Caco-2 (cell line): ENCODE measurements at regions of chr12 and their contacts with region 1.

Region 1: GRCh38 chr12:6323340-6323994 is 13.0 kb downstream of the PLEKHG6 start:
- DNase-seq: peak; percentile 70 to 80
- H3K4me3 ChIP-seq: no peak overlapping the region
- H3K4me3 Mint-ChIP-seq: no peak overlapping the region
- H3K27ac Mint-ChIP-seq: peak overlapping the region; percentile 88
- H3K4me1 ChIP-seq: peaks cover 20% of the 10 kb centered on the region
- H3K4me1 Mint-ChIP-seq: peaks cover 19% of the 10 kb centered on the region
- H3K27me3 ChIP-seq: no peaks in the 10 kb centered on the region
- H3K27me3 Mint-ChIP-seq: no peaks in the 10 kb centered on the region
- CTCF ChIP-seq: peak; percentile 61 to 87

Region 2: GRCh38 chr12:6305840-6306567 is 17.5 kb before region 1 on chr12:
- CTCF ChIA-PET with region 1: interaction called, 6 read pairs
- POLR2A ChIA-PET with region 1: interaction called, 11 read pairs
- intact Hi-C with region 1: loop called (anchors 1 kb)
- DNase-seq: no peak
- H3K4me3 ChIP-seq: no peak overlapping the region
- H3K4me3 Mint-ChIP-seq: no peak overlapping the region
- H3K27ac Mint-ChIP-seq: peak overlapping the region; percentile 37
- H3K4me1 ChIP-seq: peaks cover 49% of the 10 kb centered on the region
- H3K4me1 Mint-ChIP-seq: peaks cover 46% of the 10 kb centered on the region
- H3K27me3 ChIP-seq: no peaks in the 10 kb centered on the region
- H3K27me3 Mint-ChIP-seq: no peaks in the 10 kb centered on the region
- CTCF ChIP-seq: no peak

Region 3: DNA sequence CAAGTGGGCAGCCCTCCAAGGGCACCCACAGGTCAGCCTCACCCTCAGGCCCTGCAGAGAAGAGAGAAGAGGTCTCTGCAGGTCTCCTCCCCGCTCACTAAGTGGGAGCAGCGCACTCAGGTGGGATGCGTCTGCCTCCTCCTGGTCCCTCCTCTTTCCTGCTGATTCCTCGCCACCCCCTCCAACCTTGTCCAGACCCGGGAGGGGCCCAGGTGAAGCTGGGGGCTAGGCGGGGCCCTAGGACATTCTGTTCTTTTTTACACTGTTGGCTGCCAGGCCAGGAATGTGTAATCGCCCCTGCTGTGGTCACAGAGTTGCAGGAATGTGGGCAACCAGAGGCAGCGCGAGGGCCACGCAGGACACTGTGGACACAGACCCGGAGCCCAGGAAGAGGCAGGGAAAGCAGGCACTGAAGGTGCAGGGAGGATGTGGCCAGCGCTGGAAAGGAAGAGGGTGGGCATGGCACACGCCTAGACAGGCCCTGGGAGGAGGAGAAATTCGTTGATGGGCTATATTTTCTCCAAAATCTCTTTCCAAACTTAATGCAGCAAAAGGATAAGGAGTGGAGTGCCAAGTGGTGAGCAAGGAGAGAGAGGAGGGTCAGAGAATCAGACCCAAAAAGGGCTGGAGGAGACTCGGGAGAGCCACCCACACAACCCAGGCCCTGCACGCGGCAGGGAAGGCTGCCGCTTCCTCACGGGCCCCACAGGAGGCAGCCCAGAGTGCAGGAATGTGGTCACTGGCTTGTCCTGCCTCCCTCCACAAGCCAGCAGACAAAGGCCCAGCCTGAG is 52.8 kb after region 1 on chr12:
- CTCF ChIA-PET with region 1: interaction called, 24 read pairs
- POLR2A ChIA-PET with region 1: interaction called, 3 read pairs
- intact Hi-C with region 1: loop called (anchors 1 kb)
- DNase-seq: peak; percentile 88 to 89
- H3K4me3 ChIP-seq: no peak overlapping the region
- H3K4me3 Mint-ChIP-seq: peak overlapping the region; percentile 72
- H3K27ac Mint-ChIP-seq: peak overlapping the region; percentile 94
- H3K4me1 ChIP-seq: peaks cover 68% of the 10 kb centered on the region
- H3K4me1 Mint-ChIP-seq: peaks cover 51% of the 10 kb centered on the region
- H3K27me3 ChIP-seq: no peaks in the 10 kb centered on the region
- H3K27me3 Mint-ChIP-seq: no peaks in the 10 kb centered on the region
- CTCF ChIP-seq: peak; percentile 69 to 71

Region 4: DNA sequence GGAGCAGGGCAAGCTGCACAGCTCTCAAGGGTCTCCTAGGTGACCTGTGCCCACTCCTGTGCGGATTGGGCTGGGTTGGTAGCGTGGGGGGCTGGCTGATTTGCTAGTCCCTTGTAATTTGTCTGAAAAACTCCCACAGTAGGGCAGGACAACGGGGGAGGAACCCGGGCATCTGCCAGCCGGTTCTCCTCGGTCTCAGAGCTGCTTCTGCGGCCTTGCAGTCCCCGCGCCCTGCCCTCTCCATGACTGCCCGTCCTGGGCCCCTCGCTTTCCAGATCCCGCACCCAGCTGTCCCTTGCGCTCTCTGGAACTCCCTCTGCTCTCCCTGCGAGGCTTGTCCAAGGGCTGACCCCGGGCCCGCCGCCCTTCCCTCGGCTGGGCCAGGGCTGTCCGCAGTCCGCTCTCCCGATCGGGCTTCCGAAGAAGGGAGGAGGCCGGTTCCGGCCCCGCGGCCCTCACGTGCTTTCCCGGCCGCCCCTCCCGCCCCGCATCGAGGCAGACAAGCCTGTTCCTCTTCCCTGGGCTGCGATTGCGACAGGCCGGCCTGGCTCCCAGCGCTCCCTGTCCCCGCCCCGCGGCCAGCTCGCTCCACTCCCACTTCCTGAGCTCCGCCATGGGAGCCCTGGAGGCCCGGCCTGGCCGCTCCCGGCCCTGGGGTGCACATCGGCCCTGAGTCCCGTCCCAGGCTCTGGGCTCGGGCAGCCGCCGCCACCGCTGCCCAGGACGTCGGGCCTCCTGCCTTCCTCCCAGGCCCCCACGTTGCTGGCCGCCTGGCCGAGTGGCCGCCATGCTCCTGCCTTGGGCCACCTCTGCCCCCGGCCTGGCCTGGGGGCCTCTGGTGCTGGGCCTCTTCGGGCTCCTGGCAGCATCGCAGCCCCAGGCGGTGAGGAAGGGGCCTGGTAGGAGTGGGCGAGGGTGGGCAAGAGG is 60.4 kb after region 1 on chr12 and contains the start of gene LTBR:
- CTCF ChIA-PET with region 1: interaction called, 17 read pairs
- POLR2A ChIA-PET with region 1: interaction called, 5 read pairs
- intact Hi-C with region 1: no loop called
- DNase-seq: peak; percentile 97 to 99
- H3K4me3 ChIP-seq: peak within 1 kb of the TSS; percentile 92
- H3K4me3 Mint-ChIP-seq: peak within 1 kb of the TSS; percentile 96
- H3K27ac Mint-ChIP-seq: peak within 1 kb of the TSS; percentile 92
- H3K4me1 ChIP-seq: peaks cover 25% of the 10 kb centered on the region
- H3K4me1 Mint-ChIP-seq: peaks cover 15% of the 10 kb centered on the region
- H3K27me3 ChIP-seq: no peaks in the 10 kb centered on the region
- H3K27me3 Mint-ChIP-seq: no peaks in the 10 kb centered on the region
- CTCF ChIP-seq: peak in 1 of 2 experiments; percentile 48
- total RNA-seq, gene LTBR: 194 and 197 TPM in 2 replicates

Region 5: DNA sequence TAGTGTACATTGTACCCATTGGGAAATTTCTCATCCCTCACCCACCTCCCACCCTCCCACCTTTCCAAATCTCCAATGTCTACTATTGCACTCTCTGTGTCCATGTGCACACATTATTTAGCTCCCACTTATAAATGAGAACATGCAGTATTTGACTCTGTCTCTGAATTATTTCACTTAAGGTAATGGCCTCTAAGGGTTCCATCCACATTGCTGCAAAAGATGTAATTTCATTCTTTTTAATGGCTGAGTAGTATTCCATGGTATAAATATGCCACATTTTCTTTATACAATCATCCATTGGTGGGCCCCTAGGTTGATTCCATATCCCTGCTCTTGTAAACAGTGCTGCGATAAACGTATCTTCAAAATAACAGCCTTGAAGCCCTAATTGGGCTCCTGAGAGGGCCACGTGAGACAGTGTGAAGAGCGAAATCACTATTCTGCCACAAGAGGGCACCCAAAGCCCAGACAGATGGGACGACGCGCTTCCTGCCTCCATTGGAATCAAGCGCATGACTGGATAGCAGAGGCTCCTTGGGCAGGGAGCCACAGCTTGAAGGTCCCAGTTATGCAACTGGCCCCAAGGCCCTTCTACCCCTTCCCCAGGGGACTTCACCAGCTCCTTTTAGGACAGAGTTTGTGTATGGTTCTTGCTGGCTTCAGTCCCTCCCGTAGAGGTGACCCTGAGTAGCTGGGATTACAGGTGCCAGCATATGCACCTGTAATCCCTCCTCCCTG is 100.0 kb after region 1 on chr12:
- CTCF ChIA-PET with region 1: interaction called, 6 read pairs
- POLR2A ChIA-PET with region 1: no interaction called
- intact Hi-C with region 1: loop called (anchors 1 kb)
- DNase-seq: peak; percentile 87
- H3K4me3 ChIP-seq: no peak overlapping the region
- H3K4me3 Mint-ChIP-seq: no peak overlapping the region
- H3K27ac Mint-ChIP-seq: no peak overlapping the region
- H3K4me1 ChIP-seq: peaks cover 8% of the 10 kb centered on the region
- H3K4me1 Mint-ChIP-seq: peaks cover 8% of the 10 kb centered on the region
- H3K27me3 ChIP-seq: no peaks in the 10 kb centered on the region
- H3K27me3 Mint-ChIP-seq: no peaks in the 10 kb centered on the region
- CTCF ChIP-seq: peak; percentile 88 to 97